A549 (cell line): ENCODE measurements at regions of chr2 and their contacts with region 1.

Region 1: DNA sequence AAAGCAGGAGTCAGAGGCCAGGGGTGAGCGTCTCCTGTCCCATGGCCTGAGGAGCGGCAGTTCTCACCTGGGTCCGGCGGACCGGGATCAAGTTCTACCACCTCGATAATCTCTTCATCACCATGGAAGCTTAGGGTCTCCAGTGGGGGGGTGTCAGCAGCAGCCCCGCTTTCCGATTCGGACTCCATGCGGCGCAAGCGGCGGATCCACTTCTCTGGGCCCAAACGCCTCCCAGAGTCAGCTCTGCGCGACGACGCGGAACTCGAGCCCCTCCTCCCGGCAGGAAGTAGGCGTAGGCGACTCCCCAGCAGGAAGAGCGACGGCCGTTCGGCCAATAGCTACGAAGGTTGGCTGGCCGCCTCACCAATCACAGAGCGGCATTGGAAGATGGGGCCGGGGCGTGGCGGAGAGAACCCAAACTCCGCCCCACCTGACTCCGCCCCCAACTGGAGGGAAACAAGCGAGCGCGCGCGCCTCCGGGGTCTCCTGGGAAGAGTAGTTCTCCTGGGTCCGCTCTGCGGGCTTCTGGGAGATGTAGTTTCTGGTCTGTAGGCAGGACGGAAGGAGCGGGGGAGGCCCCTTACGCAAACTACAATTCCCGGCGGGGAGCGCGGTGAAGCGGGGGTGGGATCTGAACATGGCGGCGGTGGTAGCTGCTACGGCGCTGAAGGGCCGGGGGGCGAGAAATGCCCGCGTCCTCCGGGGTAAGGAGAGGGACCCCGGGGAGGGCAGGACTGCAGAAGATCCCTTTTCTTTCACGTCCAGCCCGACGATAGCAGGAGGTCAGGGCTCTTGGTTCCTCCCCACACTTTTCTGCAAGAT is at the starts of genes AAMP and PNKD:
- DNase-seq: peak; percentile 97 to 99
- ATAC-seq: peak; percentile 88 to 93
- H3K4me3 ChIP-seq: peak within 1 kb of the TSS; percentile 97
- H3K27ac ChIP-seq: peak within 1 kb of the TSS; percentile 90 to 92
- H3K4me1 ChIP-seq: peaks cover 25% of the 10 kb centered on the region
- CTCF ChIP-seq: no peak
- EP300 ChIP-seq: no peak
- POLR2A ChIP-seq: peak; percentile 75
- RAD21 ChIP-seq: no peak
- polyA plus RNA-seq, gene AAMP: 71.3 and 82.0 TPM in 2 replicates
- polyA plus RNA-seq, gene PNKD: 46.2 and 52.6 TPM in 2 replicates

Region 2: GRCh38 chr2:218168635-218169462 is 101.3 kb before region 1 on chr2:
- CTCF ChIA-PET with region 1: no interaction called
- POLR2A ChIA-PET with region 1: no interaction called
- DNase-seq: peak; percentile 35 to 40
- ATAC-seq: peak; percentile 53 to 90; a peak in 4 of 6 replicates
- H3K4me3 ChIP-seq: no peak overlapping the region
- H3K27ac ChIP-seq: no peak overlapping the region
- H3K4me1 ChIP-seq: peaks cover 9% of the 10 kb centered on the region; the same call in 1 of the 3 replicates
- CTCF ChIP-seq: peak; percentile 60
- EP300 ChIP-seq: no peak
- POLR2A ChIP-seq: no peak
- RAD21 ChIP-seq: peak; percentile 26 to 47; a peak in 3 of 5 replicates

Region 3: DNA sequence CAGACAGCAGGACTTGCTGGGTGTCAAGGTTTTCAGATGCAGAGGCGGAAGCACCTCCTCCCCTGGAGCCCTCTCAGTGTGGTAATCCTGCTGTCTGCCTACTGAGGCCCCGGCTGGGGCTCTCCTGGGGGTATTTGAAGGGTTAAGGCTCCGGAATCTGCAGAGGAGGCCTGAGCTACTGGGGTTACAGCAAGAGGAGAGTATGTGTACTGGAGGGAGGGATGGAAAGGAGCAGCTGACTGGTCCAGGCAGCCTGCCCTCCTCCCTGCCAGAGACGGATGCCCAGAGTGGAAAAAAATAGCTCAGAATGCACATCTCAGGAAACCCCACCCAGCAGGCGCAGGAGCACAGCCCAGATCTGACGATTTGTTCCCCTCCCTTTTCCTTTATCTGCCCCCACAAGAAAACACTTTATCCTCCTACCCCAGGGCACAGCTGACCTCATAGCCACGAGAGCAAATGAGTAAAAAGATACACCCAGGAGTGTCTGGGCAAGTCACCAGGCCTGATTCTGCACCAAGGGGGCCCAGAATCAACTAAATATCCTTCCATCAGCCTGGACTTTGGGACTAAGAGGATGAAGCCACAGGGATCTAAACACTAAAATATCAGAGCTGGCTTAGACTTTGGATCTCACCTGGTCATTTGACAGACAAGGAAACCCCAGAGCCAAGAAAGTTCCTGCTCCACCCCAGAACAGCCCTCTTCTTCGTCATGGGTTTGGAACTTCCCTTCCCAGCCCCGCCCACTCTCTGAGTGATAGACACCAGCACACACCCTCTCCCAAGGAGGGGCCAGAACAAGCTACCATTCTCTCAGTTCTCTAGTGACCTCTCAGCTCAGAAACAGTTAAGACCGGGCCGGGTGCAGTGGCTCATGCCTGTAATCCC is 16.7 kb after region 1 on chr2:
- CTCF ChIA-PET with region 1: interaction called, 105 read pairs
- POLR2A ChIA-PET with region 1: interaction called, 6 read pairs
- DNase-seq: peak; percentile 91
- ATAC-seq: peak; percentile 88 to 92
- H3K4me3 ChIP-seq: peak overlapping the region; percentile 20; the same call in 2 of the 3 replicates
- H3K27ac ChIP-seq: peak overlapping the region; percentile 64 to 87
- H3K4me1 ChIP-seq: peaks cover 56% of the 10 kb centered on the region
- CTCF ChIP-seq: no peak
- EP300 ChIP-seq: no peak
- POLR2A ChIP-seq: no peak
- RAD21 ChIP-seq: no peak